ENCODE measurements at regions of chr13 and their contacts with region 1.

Region 1: GRCh38 chr13:20197361-20197834 is 4.7 kb upstream of the GJB2 start:
- DNase-seq: peak; percentile 41
- ATAC-seq: peak; percentile 60
- H3K4me3 ChIP-seq: no peak overlapping the region
- H3K27ac ChIP-seq: no peak overlapping the region
- H3K4me1 ChIP-seq: peaks cover 23% of the 10 kb centered on the region
- H3K27me3 ChIP-seq: peaks cover 3 to 23% of the 10 kb centered on the region in 2 experiments; a peak in 4 of 5 replicates
- CTCF ChIP-seq: peak; percentile 64
- EP300 ChIP-seq: no peak
- POLR2A ChIP-seq: no peak
- RAD21 ChIP-seq: no peak

Region 2: DNA sequence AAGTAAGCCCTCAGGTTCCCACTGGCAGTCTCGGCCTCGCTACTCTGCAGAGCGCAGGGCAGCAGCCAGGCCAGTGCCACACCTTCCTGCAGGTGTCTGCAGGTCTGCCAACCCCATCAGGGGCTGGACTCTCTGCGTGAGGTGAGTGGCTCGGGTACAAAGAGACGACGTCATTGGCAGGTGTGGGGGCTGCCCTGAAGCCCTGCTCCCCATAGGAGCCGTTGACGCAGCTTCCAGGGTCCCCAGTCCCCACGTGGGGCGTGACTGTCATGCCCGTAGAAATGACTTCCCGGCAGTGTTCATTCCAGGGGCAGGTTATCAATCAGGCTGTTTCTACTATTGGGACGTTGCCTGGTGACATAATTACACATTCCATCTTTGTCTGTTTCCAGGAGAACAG is 50.0 kb after region 1 on chr13:
- CTCF ChIA-PET with region 1: no interaction called
- POLR2A ChIA-PET with region 1: no interaction called
- in situ Hi-C with region 1: no loop called
- intact Hi-C with region 1: no loop called
- DNase-seq: no peak
- ATAC-seq: no peak
- H3K4me3 ChIP-seq: no peak overlapping the region
- H3K27ac ChIP-seq: no peak overlapping the region
- H3K4me1 ChIP-seq: peaks cover 10% of the 10 kb centered on the region; the same call in 1 of the 2 replicates
- H3K27me3 ChIP-seq: no peaks in the 10 kb centered on the region
- CTCF ChIP-seq: no peak
- EP300 ChIP-seq: no peak
- POLR2A ChIP-seq: no peak
- RAD21 ChIP-seq: no peak

Region 3: GRCh38 chr13:20294497-20294896 is 97.1 kb after region 1 on chr13:
- CTCF ChIA-PET with region 1: no interaction called
- POLR2A ChIA-PET with region 1: no interaction called
- in situ Hi-C with region 1: loop called (anchors 10 kb)
- intact Hi-C with region 1: no loop called
- DNase-seq: no peak
- ATAC-seq: peak; percentile 31; the same call in 1 of the 3 replicates
- H3K4me3 ChIP-seq: no peak overlapping the region
- H3K27ac ChIP-seq: no peak overlapping the region
- H3K4me1 ChIP-seq: no peaks in the 10 kb centered on the region
- H3K27me3 ChIP-seq: peaks cover 0 to 1% of the 10 kb centered on the region in 2 experiments; a peak in 1 of 5 replicates
- CTCF ChIP-seq: 0 out of 2 replicates have a peak, but pooled peaks have one; percentile 7
- EP300 ChIP-seq: no peak
- POLR2A ChIP-seq: no peak
- RAD21 ChIP-seq: no peak

Region 4: GRCh38 chr13:20305587-20305986 is 108.2 kb after region 1 on chr13:
- CTCF ChIA-PET with region 1: no interaction called
- POLR2A ChIA-PET with region 1: no interaction called
- in situ Hi-C with region 1: no loop called
- intact Hi-C with region 1: loop called (anchors 5 kb)
- DNase-seq: no peak
- ATAC-seq: peak; percentile 34; the same call in 2 of the 3 replicates
- H3K4me3 ChIP-seq: no peak overlapping the region
- H3K27ac ChIP-seq: no peak overlapping the region
- H3K4me1 ChIP-seq: no peaks in the 10 kb centered on the region
- H3K27me3 ChIP-seq: no peaks in the 10 kb centered on the region
- CTCF ChIP-seq: no peak
- EP300 ChIP-seq: no peak
- POLR2A ChIP-seq: no peak
- RAD21 ChIP-seq: no peak

Region 5: DNA sequence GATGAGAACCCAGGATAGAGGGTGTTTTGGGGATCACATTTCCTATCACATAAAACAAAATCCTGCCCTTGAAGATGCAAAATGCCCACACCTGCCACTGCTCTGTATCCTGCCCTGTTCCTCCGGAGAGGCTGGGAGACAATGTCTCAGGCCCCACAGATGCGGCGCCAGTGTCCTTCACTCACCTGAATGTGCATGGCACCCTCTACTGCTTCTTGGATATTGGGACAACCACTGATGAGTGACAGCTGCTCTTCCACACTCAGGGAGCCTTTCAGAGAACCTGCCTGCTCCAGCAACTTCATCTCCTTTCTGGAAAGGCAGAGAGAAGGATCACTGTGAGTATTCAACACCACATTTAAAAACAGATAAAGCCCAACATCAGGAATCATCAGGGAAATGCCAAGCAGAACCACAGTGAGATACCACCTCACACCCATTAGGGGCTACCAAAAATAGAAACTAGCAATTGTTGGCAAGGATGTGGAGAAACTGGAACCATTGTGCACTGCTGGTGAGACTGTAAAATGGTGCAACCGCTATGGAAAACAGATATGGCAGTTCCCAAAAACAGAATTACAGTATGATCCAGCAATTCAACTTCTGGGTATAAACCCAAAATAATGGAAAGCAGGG is 291.9 kb after region 1 on chr13:
- CTCF ChIA-PET with region 1: no interaction called
- POLR2A ChIA-PET with region 1: no interaction called
- in situ Hi-C with region 1: no loop called
- intact Hi-C with region 1: loop called (anchors 5 kb)
- DNase-seq: no peak
- ATAC-seq: no peak
- H3K4me3 ChIP-seq: no peak overlapping the region
- H3K27ac ChIP-seq: no peak overlapping the region
- H3K4me1 ChIP-seq: no peaks in the 10 kb centered on the region
- H3K27me3 ChIP-seq: no peaks in the 10 kb centered on the region
- CTCF ChIP-seq: no peak
- EP300 ChIP-seq: no peak
- POLR2A ChIP-seq: no peak
- RAD21 ChIP-seq: no peak

Measured in HepG2 (cell line).